ENCODE measurements at regions of chr15 and their contacts with region 1.

Region 1: DNA sequence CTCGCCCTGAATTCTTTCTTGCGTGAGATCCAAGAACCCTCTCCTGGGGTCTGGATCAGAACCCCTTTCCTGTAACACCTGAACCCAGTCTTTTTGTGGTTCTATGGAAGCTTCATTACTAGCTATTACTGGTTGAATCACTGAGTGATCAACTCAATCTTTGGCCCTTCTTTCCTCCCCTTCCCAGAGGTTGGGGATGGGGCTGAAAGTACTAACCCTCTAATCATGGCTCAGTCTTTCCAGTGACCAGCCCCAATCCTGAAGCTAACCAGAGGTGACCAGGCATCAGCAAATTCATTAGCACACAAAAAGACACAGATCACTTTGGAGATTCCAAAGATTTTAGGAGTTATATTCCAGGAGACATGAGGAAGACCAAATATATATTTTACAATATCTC is 39.5 kb downstream of the HERC1 start:
- DNase-seq: no peak
- ATAC-seq: no peak
- H3K4me3 ChIP-seq: no peak overlapping the region
- H3K27ac ChIP-seq: no peak overlapping the region
- H3K4me1 ChIP-seq: peaks cover 9% of the 10 kb centered on the region
- H3K27me3 ChIP-seq: no peaks in the 10 kb centered on the region
- CTCF ChIP-seq: no peak
- EP300 ChIP-seq: no peak
- POLR2A ChIP-seq: no peak
- RAD21 ChIP-seq: no peak

Region 2: DNA sequence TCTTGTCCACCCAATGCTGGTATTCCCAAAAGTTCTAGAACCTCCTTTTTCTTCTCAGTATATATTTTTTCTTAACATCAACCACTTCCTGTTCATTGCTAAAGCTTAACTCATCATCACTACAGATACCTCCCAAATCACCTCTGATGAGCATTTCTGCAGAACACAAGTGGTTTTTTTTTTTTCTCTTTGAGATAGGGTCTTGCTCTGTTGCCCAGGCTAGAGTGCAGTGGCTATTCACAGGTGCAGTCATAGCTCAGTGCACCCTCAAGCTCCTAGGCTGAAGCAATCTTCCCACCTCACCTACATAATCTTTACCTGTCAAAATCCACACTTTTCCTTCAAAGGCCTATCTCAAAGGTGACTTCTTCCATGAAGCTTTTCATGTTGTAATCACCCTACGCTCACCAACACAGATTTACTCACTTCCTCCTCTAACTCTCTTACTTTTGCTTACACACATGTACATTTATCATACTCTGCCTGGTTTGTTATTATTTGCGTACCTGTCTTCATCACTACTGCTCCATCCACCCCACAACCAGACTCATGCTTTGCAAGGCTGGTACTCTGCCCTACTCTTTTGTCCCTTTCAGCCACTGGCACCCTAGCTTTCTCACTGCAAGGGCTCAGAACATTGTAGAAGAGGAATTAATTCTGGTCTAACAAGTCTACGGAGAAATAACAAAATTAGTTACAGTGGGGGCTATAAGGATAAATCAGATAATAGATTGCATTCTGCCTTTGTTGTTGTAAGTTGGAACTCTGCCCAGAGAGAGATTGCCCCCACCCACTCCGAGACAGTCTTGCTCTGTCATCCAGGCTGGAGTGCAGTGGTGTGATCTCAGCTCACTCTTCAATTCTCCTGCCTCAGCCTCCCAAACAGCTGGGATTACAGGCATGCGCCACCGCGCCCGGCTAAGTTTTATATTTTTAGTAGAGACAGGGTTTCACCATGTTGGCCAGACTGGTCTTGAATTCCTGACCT is 12.0 kb after region 1 on chr15:
- CTCF ChIA-PET with region 1: interaction called, 4 read pairs
- POLR2A ChIA-PET with region 1: interaction called, 10 read pairs
- RAD21 ChIA-PET with region 1: no interaction called
- SMC1A ChIA-PET with region 1: interaction called, 5 read pairs
- in situ Hi-C with region 1: no loop called
- intact Hi-C with region 1: no loop called
- DNase-seq: no peak
- ATAC-seq: peak; percentile 14; the same call in 2 of the 3 replicates
- H3K4me3 ChIP-seq: no peak overlapping the region
- H3K27ac ChIP-seq: no peak overlapping the region
- H3K4me1 ChIP-seq: peaks cover 35% of the 10 kb centered on the region
- H3K27me3 ChIP-seq: no peaks in the 10 kb centered on the region
- CTCF ChIP-seq: no peak
- EP300 ChIP-seq: no peak
- POLR2A ChIP-seq: no peak
- RAD21 ChIP-seq: no peak

Region 3: GRCh38 chr15:63945007-63945788 is 150.9 kb after region 1 on chr15:
- CTCF ChIA-PET with region 1: no interaction called
- POLR2A ChIA-PET with region 1: no interaction called
- RAD21 ChIA-PET with region 1: no interaction called
- SMC1A ChIA-PET with region 1: no interaction called
- in situ Hi-C with region 1: no loop called
- intact Hi-C with region 1: no loop called
- DNase-seq: no peak
- ATAC-seq: peak; percentile 89
- H3K4me3 ChIP-seq: no peak overlapping the region
- H3K27ac ChIP-seq: no peak overlapping the region
- H3K4me1 ChIP-seq: peaks cover 13% of the 10 kb centered on the region
- H3K27me3 ChIP-seq: no peaks in the 10 kb centered on the region
- CTCF ChIP-seq: peak; percentile 83 to 99 (median 98)
- EP300 ChIP-seq: no peak
- POLR2A ChIP-seq: no peak
- RAD21 ChIP-seq: peak; percentile 78

Measured in GM12878 (cell line).